WTC11 (cell line): ENCODE measurements at regions of chr1 and their contacts with region 1.

Region 1: DNA sequence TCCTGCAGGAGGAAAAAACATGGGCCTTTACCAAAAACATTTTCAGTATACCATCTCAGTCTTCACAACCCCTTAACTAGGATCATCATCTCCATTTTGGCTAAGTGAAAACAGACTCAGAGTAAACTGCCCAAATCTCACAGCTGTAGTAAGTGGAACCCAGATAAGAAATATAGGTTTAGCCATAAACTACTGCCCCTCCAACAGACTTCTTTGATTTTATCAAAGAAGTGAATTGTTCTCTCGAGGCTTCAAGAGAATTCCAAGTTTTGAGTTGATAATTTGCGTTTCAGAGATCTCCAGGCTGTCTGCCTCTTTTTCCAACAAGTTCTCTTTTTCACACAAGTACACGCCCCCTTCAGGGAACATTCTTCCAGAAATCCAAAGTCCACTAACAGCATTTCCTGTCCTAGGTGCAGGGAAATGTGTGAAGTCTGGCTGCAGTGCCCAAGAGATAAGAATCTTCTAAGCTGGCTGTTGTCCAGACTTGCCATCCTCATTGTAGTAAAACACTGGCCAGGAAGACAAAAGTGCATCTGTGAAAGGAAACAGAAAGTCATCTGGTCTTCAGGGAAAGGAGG is 30.8 kb downstream of the RNF19B start:
- DNase-seq: no peak
- ATAC-seq: no peak; the same call in 1 of the 2 replicates
- H3K4me3 Mint-ChIP-seq: no peak overlapping the region
- H3K27ac Mint-ChIP-seq: peak overlapping the region; percentile 94
- H3K4me1 Mint-ChIP-seq: peaks cover 7% of the 10 kb centered on the region
- H3K27me3 Mint-ChIP-seq: peaks cover 5% of the 10 kb centered on the region
- CTCF ChIP-seq: no peak

Region 2: GRCh38 chr1:32742977-32743376 is 190.9 kb before region 1 on chr1:
- CTCF ChIA-PET with region 1: no interaction called
- POLR2A ChIA-PET with region 1: no interaction called
- DNase-seq: no peak
- ATAC-seq: peak; percentile 10
- H3K4me3 Mint-ChIP-seq: peak overlapping the region; percentile 74
- H3K27ac Mint-ChIP-seq: peak overlapping the region; percentile 63
- H3K4me1 Mint-ChIP-seq: peaks cover 28% of the 10 kb centered on the region
- H3K27me3 Mint-ChIP-seq: peaks cover 11% of the 10 kb centered on the region
- CTCF ChIP-seq: no peak

Region 3: GRCh38 chr1:32828341-32828740 is 105.5 kb before region 1 on chr1:
- CTCF ChIA-PET with region 1: no interaction called
- POLR2A ChIA-PET with region 1: no interaction called
- DNase-seq: no peak
- ATAC-seq: no peak
- H3K4me3 Mint-ChIP-seq: no peak overlapping the region
- H3K27ac Mint-ChIP-seq: no peak overlapping the region
- H3K4me1 Mint-ChIP-seq: no peaks in the 10 kb centered on the region
- H3K27me3 Mint-ChIP-seq: no peaks in the 10 kb centered on the region
- CTCF ChIP-seq: no peak

Region 4: DNA sequence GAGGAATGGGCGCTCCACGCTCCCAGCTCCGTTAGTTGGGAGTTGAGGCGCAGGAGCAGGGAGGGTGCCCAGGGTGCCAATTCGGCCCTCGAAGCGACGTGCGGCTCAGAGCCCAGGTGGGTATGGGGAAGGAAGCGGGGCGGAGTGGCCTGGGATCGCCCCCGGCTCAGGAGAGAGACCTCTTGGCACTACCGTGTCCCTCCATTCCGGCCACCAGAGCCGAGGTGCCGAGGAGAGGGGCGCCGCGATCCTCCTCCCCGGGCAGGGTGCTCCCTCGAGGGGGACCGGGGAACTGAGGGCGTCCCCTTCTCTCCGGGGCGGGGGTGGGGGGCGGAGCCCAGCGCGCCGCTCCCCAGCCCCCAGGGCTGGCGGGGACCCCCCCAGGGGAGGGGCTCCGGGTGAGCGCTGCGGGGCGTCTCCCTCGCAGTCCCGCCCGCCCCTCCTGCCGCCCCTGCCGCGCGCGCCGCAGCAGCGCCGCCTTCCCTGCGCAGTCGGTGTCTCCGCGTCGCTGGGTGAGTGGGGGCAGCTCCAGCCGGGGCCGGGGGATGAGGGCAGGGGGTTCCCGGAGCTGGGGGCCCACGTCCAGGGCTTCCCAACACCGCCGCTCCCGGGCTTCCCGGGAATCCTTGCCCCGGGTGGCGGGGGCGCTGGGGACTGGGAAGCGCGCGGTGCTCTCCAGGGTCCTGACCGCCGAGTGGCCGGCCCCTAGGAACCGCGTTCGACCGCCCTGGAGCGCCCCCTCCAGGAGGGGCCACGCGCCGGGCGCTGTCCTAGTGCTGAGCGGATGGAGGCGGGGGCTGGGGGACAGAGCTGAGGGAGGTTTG is 47.6 kb before region 1 on chr1 and contains the start of gene HPCA:
- CTCF ChIA-PET with region 1: interaction called, 12 read pairs
- POLR2A ChIA-PET with region 1: no interaction called
- DNase-seq: peak; percentile 90
- ATAC-seq: peak; percentile 94
- H3K4me3 Mint-ChIP-seq: peak within 1 kb of the TSS; percentile 65
- H3K27ac Mint-ChIP-seq: no peak within 1 kb of the TSS
- H3K4me1 Mint-ChIP-seq: peaks cover 12% of the 10 kb centered on the region
- H3K27me3 Mint-ChIP-seq: peaks cover 74% of the 10 kb centered on the region
- CTCF ChIP-seq: peak; percentile 30; the same call in 1 of the 2 replicates
- total RNA-seq, gene HPCA: 1.5 to 2.2 TPM (median 1.9 TPM) in 3 replicates

Region 5: DNA sequence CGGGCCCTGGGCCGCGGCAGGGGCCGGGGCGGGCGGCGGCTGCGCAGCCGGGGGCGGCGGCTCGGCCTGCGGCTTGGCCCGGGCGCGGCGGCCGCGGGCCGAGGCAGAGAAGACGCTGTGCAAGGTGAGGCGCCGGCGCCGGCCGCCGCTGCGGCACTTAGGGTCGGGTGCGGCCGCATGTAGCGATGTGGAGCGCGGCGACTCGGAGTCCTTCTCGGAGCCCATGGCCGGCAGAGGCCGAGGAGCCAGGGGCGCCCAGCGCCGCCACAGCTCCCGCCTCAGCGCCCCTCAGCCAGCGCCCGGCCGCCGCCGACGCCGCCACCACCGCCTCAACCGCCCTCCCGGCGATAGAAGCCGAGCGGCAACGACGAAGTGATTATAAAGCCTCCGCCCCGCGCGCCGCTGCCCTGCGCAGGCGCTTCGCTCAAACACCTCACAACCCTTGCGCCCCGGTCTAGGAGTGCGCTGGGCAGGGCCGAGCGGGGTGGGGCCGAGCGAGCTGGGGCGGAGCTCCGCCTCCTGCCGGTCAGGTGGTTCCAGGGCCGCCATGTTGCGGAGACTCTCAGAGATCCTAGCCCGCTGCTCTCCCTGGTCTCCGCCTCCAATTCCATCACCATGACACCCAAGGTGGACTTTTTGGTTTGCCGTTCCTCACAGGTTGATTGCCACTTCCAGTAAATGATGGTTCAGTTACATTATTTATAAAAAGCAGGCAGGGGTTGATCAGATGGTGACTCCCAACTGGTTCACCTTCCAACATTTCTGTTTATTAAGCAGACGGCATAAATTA is 30.8 kb after region 1 on chr1 and contains the start of gene RNF19B:
- CTCF ChIA-PET with region 1: interaction called, 13 read pairs
- POLR2A ChIA-PET with region 1: interaction called, 3 read pairs
- DNase-seq: peak; percentile 97
- ATAC-seq: peak; percentile 97
- H3K4me3 Mint-ChIP-seq: peak within 1 kb of the TSS; percentile 69
- H3K27ac Mint-ChIP-seq: peak within 1 kb of the TSS; percentile 88
- H3K4me1 Mint-ChIP-seq: peaks cover 28% of the 10 kb centered on the region
- H3K27me3 Mint-ChIP-seq: peaks cover 40% of the 10 kb centered on the region
- CTCF ChIP-seq: no peak
- total RNA-seq, gene RNF19B: 14.8 to 21.9 TPM (median 15.4 TPM) in 3 replicates

Region 6: GRCh38 chr1:32992489-32993323 is 58.9 kb after region 1 on chr1:
- CTCF ChIA-PET with region 1: interaction called, 14 read pairs
- POLR2A ChIA-PET with region 1: interaction called, 3 read pairs
- DNase-seq: peak; percentile 72
- ATAC-seq: peak; percentile 99
- H3K4me3 Mint-ChIP-seq: no peak overlapping the region
- H3K27ac Mint-ChIP-seq: peak overlapping the region; percentile 90
- H3K4me1 Mint-ChIP-seq: peaks cover 25% of the 10 kb centered on the region
- H3K27me3 Mint-ChIP-seq: no peaks in the 10 kb centered on the region; the same call in none of the 2 replicates
- CTCF ChIP-seq: no peak

Region 7: GRCh38 chr1:33007190-33008050 is 73.6 kb after region 1 on chr1:
- CTCF ChIA-PET with region 1: interaction called, 29 read pairs
- POLR2A ChIA-PET with region 1: no interaction called
- DNase-seq: no peak
- ATAC-seq: peak; percentile 68
- H3K4me3 Mint-ChIP-seq: no peak overlapping the region
- H3K27ac Mint-ChIP-seq: peak overlapping the region; percentile 13; the same call in 1 of the 2 replicates
- H3K4me1 Mint-ChIP-seq: peaks cover 18% of the 10 kb centered on the region
- H3K27me3 Mint-ChIP-seq: no peaks in the 10 kb centered on the region
- CTCF ChIP-seq: no peak

Region 8: GRCh38 chr1:33080885-33081553 is 147.2 kb after region 1 on chr1 and contains the start of gene AZIN2:
- CTCF ChIA-PET with region 1: interaction called, 27 read pairs
- POLR2A ChIA-PET with region 1: interaction called, 4 read pairs
- DNase-seq: peak; percentile 98
- ATAC-seq: peak; percentile 97
- H3K4me3 Mint-ChIP-seq: peak within 1 kb of the TSS; percentile 79
- H3K27ac Mint-ChIP-seq: no peak within 1 kb of the TSS
- H3K4me1 Mint-ChIP-seq: peaks cover 12% of the 10 kb centered on the region
- H3K27me3 Mint-ChIP-seq: peaks cover 72% of the 10 kb centered on the region
- CTCF ChIP-seq: no peak
- total RNA-seq, gene AZIN2: 0.89 to 1.7 TPM (median 1.1 TPM) in 3 replicates